Naive thymus-derived CD4-positive, alpha-beta T cell (primary cell): ENCODE measurements at regions of chr14 and their contacts with region 1.

Region 1: GRCh38 chr14:24634158-24634557 is at the start of gene GZMB:
- DNase-seq: peak in 1 of 9 donors; percentile 75
- ATAC-seq: peak; percentile 88
- H3K4me3 ChIP-seq: no peak within 1 kb of the TSS
- H3K4me3 Mint-ChIP-seq: peak within 1 kb of the TSS in 3 of 10 donors; percentile 45 to 96 (median 85)
- H3K27ac ChIP-seq: no peak within 1 kb of the TSS
- H3K27ac Mint-ChIP-seq: peak within 1 kb of the TSS in 2 of 9 donors; percentile 7 to 95
- H3K4me1 ChIP-seq: peaks cover 0 to 11% of the 10 kb centered on the region in 2 donors
- H3K4me1 Mint-ChIP-seq: peaks cover 0 to 62% (median 0%) of the 10 kb centered on the region in 7 donors
- H3K27me3 ChIP-seq: no peaks in the 10 kb centered on the region
- H3K27me3 Mint-ChIP-seq: peaks cover 0 to 5% (median 0%) of the 10 kb centered on the region in 5 donors
- total RNA-seq, gene GZMB: 1.00 to 692 (median 20.3) TPM

Region 2: DNA sequence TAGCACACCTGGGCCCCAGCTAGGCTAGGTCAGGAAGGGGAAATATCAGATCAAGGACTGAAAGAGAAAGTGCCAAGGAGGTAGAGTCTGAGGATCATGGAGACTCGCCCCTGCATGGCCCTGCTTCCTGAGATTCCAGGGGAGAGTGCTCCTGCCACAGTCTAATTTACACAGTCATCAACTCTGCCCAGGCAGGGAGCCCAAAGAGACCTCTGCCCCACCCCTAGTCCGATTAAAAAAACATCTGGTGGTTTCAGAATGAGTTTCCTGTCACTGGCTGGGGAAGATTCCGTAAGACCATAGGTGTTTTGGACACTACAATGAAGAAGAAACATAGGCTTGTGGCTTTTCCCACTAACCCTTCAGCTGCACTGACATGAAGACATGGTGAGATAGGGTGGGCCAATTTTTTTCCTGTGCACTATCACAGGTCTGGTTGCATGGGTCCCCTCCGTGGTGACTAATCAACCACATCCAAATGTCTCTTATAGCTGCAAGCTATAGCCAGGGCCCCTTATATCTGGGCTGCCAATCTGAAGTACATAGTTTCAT is 31.4 kb after region 1 on chr14:
- CTCF ChIA-PET with region 1: no interaction called
- POLR2A ChIA-PET with region 1: no interaction called
- intact Hi-C with region 1: loop called in 1 of 2 experiments (anchors 1 kb)
- DNase-seq: peak in 1 of 9 donors; percentile 50
- ATAC-seq: peak; percentile 72
- H3K4me3 ChIP-seq: peak overlapping the region; percentile 26
- H3K4me3 Mint-ChIP-seq: peak overlapping the region in 6 of 10 donors; percentile 7 to 87 (median 38)
- H3K27ac ChIP-seq: no peak overlapping the region
- H3K27ac Mint-ChIP-seq: peak overlapping the region in 3 of 9 donors; percentile 48 to 94 (median 51)
- H3K4me1 ChIP-seq: peaks cover 10 to 33% of the 10 kb centered on the region in 2 donors
- H3K4me1 Mint-ChIP-seq: peaks cover 9 to 89% (median 12%) of the 10 kb centered on the region in 7 donors
- H3K27me3 ChIP-seq: no peaks in the 10 kb centered on the region
- H3K27me3 Mint-ChIP-seq: peaks cover 0 to 8% (median 5%) of the 10 kb centered on the region in 5 donors

Region 3: DNA sequence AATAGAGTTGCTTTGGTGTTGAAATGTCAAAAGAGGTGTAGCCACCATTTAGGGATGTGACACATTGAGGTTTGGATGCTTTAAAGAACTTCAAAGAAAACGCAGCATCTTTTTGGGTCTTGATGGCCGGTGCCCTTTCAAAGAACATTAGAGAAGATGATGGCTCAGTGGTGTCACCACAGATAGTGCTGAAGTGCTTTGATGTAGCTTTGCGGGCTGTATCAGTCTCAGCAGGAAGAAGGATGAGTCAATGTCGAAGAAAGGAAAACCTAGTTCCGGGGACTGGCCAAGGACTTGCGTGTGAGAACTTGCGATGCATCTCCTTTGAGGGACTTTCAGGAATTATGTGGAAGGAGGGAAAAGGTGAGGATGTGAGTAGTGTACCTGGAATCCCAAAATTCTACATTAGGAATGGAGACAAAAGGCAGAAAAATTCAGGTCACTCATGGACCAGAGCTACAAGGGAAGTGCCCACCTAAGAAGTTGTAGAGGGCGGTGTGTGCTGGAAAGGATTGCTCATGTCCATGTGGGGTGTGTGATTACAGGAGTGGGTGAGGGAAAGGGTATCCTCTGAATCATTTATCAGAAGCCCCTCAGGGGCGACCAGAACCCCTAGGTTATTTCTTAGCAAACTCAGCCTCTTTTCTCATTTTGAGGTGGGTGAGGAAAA is 39.5 kb after region 1 on chr14:
- CTCF ChIA-PET with region 1: no interaction called
- POLR2A ChIA-PET with region 1: no interaction called
- intact Hi-C with region 1: loop called in 1 of 2 experiments (anchors 1 kb)
- DNase-seq: peak in 8 of 9 donors; percentile 48 to 72 (median 60)
- ATAC-seq: peak; percentile 90
- H3K4me3 ChIP-seq: peak overlapping the region; percentile 49
- H3K4me3 Mint-ChIP-seq: peak overlapping the region; percentile 74 to 92 (median 86)
- H3K27ac ChIP-seq: peak overlapping the region; percentile 51
- H3K27ac Mint-ChIP-seq: peak overlapping the region; percentile 72 to 95 (median 89)
- H3K4me1 ChIP-seq: peaks cover 30 to 43% of the 10 kb centered on the region in 2 donors
- H3K4me1 Mint-ChIP-seq: peaks cover 36 to 81% (median 59%) of the 10 kb centered on the region in 7 donors
- H3K27me3 ChIP-seq: no peaks in the 10 kb centered on the region
- H3K27me3 Mint-ChIP-seq: no peaks in the 10 kb centered on the region

Region 4: DNA sequence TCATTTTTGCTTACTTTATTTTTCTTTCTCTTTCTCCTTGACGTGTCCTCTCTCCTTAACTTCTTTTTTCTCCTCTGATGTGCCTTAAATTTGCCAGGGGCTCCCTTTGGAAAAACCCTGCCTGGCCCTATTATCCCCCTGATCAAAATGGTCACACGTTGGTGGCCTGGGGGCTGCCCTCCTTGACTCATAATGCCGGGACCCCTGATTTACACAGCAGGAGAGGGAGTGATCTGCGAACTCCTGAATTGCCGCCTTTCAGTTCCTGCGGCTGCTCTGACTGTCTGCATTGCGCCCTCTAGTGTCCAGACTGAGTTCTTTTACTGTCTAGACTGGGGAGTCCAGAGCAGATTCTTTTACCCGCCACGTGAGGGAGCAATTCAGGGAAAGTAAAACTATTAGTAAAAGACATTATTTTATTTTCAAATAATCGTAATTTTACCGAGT is 44.7 kb after region 1 on chr14:
- CTCF ChIA-PET with region 1: interaction called, 7 read pairs
- POLR2A ChIA-PET with region 1: no interaction called
- intact Hi-C with region 1: loop called in 1 of 2 experiments (anchors 1 kb)
- DNase-seq: peak; percentile 45 to 85 (median 78)
- ATAC-seq: peak; percentile 96
- H3K4me3 ChIP-seq: peak overlapping the region; percentile 33
- H3K4me3 Mint-ChIP-seq: peak overlapping the region; percentile 71 to 93 (median 86)
- H3K27ac ChIP-seq: no peak overlapping the region
- H3K27ac Mint-ChIP-seq: peak overlapping the region; percentile 33 to 95 (median 70)
- H3K4me1 ChIP-seq: peaks cover 17 to 44% of the 10 kb centered on the region in 2 donors
- H3K4me1 Mint-ChIP-seq: peaks cover 35 to 65% (median 57%) of the 10 kb centered on the region in 7 donors
- H3K27me3 ChIP-seq: no peaks in the 10 kb centered on the region
- H3K27me3 Mint-ChIP-seq: peaks cover 0 to 4% (median 0%) of the 10 kb centered on the region in 5 donors